ENCODE measurements at regions of chr3 and their contacts with region 1.

Region 1: DNA sequence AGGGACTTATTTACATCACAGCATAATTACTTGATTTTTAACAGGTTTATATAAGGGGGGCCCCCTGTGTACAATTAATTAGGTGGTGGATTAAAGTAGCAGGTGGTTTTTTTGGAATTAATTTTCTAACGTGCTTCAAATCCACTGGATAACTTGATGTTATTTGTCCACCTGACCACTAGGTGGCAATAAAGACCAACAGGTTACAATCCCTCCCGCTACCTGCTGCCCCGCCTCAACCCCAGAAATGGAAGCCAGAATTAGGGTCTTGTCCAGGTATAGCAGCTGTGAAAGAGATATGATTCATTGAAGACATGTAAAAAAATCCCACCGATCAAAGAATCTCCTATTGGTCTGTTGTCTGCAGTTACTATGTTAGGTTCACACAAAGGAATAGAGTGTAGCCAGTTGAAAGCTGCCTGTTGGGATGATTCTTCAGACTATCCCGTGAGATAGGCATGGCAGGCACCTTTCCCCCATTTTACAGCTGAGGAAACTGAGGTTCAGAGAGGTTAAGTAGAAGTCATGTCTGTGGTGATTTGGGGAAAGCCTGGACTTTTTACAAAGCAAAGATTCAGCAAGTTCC is 44.0 kb downstream of the MFSD1 start:
- DNase-seq: peak in 7 of 9 donors; percentile 14 to 57 (median 44)
- ATAC-seq: peak; percentile 56
- H3K4me3 ChIP-seq: no peak overlapping the region
- H3K4me3 Mint-ChIP-seq: peak overlapping the region in 1 of 10 donors; percentile 26
- H3K27ac ChIP-seq: no peak overlapping the region
- H3K27ac Mint-ChIP-seq: peak overlapping the region in 2 of 9 donors; percentile 10 to 38
- H3K4me1 ChIP-seq: no peaks in the 10 kb centered on the region
- H3K4me1 Mint-ChIP-seq: peaks cover 0 to 22% (median 12%) of the 10 kb centered on the region in 7 donors
- H3K27me3 ChIP-seq: no peaks in the 10 kb centered on the region
- H3K27me3 Mint-ChIP-seq: no peaks in the 10 kb centered on the region

Region 2: GRCh38 chr3:158050461-158050860 is 795.4 kb before region 1 on chr3:
- CTCF ChIA-PET with region 1: no interaction called
- POLR2A ChIA-PET with region 1: no interaction called
- intact Hi-C with region 1: no loop called
- DNase-seq: no peak
- ATAC-seq: no peak
- H3K4me3 ChIP-seq: no peak overlapping the region
- H3K4me3 Mint-ChIP-seq: no peak overlapping the region
- H3K27ac ChIP-seq: no peak overlapping the region
- H3K27ac Mint-ChIP-seq: no peak overlapping the region
- H3K4me1 ChIP-seq: no peaks in the 10 kb centered on the region
- H3K4me1 Mint-ChIP-seq: no peaks in the 10 kb centered on the region
- H3K27me3 ChIP-seq: no peaks in the 10 kb centered on the region
- H3K27me3 Mint-ChIP-seq: peaks cover 0 to 7% (median 5%) of the 10 kb centered on the region in 5 donors

Region 3: GRCh38 chr3:158863247-158863646 is 17.4 kb after region 1 on chr3:
- CTCF ChIA-PET with region 1: no interaction called
- POLR2A ChIA-PET with region 1: no interaction called
- intact Hi-C with region 1: no loop called
- DNase-seq: no peak
- ATAC-seq: no peak
- H3K4me3 ChIP-seq: no peak overlapping the region
- H3K4me3 Mint-ChIP-seq: no peak overlapping the region
- H3K27ac ChIP-seq: no peak overlapping the region
- H3K27ac Mint-ChIP-seq: no peak overlapping the region
- H3K4me1 ChIP-seq: no peaks in the 10 kb centered on the region
- H3K4me1 Mint-ChIP-seq: peaks cover 0 to 13% (median 0%) of the 10 kb centered on the region in 7 donors
- H3K27me3 ChIP-seq: no peaks in the 10 kb centered on the region
- H3K27me3 Mint-ChIP-seq: peaks cover 0 to 4% (median 0%) of the 10 kb centered on the region in 5 donors

Region 4: GRCh38 chr3:159804726-159805410 is 959.0 kb after region 1 on chr3:
- CTCF ChIA-PET with region 1: no interaction called
- POLR2A ChIA-PET with region 1: no interaction called
- intact Hi-C with region 1: loop called (anchors 2 to 10 kb)
- DNase-seq: peak in 1 of 9 donors; percentile 8
- ATAC-seq: peak; percentile 48
- H3K4me3 ChIP-seq: no peak overlapping the region
- H3K4me3 Mint-ChIP-seq: no peak overlapping the region
- H3K27ac ChIP-seq: no peak overlapping the region
- H3K27ac Mint-ChIP-seq: no peak overlapping the region
- H3K4me1 ChIP-seq: no peaks in the 10 kb centered on the region
- H3K4me1 Mint-ChIP-seq: no peaks in the 10 kb centered on the region
- H3K27me3 ChIP-seq: no peaks in the 10 kb centered on the region
- H3K27me3 Mint-ChIP-seq: peaks cover 0 to 17% (median 9%) of the 10 kb centered on the region in 5 donors

Region 5: DNA sequence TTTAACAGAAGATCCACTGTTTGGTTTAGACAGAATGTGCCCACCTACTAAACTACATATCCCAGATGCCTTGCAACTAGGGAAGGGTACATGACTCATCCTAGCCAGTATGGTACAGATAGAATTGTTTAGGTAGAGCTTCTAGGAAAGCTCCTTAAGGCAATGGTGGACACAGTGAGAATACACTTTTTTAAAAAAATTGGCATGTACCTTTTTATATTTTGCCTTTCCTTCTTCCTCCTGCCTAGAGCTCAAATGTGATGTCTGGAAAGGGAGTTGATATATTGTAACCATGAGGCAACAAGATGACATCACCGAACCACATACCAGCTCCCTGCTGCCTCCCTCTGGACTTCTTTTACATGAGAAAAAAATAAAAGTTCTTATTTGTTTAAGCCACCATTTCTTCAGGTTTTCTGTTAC is 1365.0 kb after region 1 on chr3:
- CTCF ChIA-PET with region 1: no interaction called
- POLR2A ChIA-PET with region 1: no interaction called
- intact Hi-C with region 1: no loop called
- DNase-seq: no peak
- ATAC-seq: peak; percentile 26
- H3K4me3 ChIP-seq: no peak overlapping the region
- H3K4me3 Mint-ChIP-seq: no peak overlapping the region
- H3K27ac ChIP-seq: no peak overlapping the region
- H3K27ac Mint-ChIP-seq: no peak overlapping the region
- H3K4me1 ChIP-seq: no peaks in the 10 kb centered on the region
- H3K4me1 Mint-ChIP-seq: no peaks in the 10 kb centered on the region
- H3K27me3 ChIP-seq: no peaks in the 10 kb centered on the region
- H3K27me3 Mint-ChIP-seq: peaks cover 12 to 33% (median 27%) of the 10 kb centered on the region in 5 donors

Measured in naive thymus-derived CD4-positive, alpha-beta T cell (primary cell).